Activated naive CD4-positive, alpha-beta T cell treated with anti-CD3 and anti-CD28 coated beads, Interleukin-2, amount 10 ng/mL, durations not matched to agents 7 days and 5 days (primary cell): ENCODE measurements at regions of chr16 and their contacts with region 1.

Region 1: GRCh38 chr16:46908540-46909372 is 24.6 kb downstream of the GPT2 start:
- DNase-seq: peak; percentile 75
- H3K4me3 Mint-ChIP-seq: no peak overlapping the region
- H3K27ac Mint-ChIP-seq: no peak overlapping the region
- H3K4me1 Mint-ChIP-seq: peaks cover 13% of the 10 kb centered on the region
- H3K27me3 Mint-ChIP-seq: no peaks in the 10 kb centered on the region

Region 2: GRCh38 chr16:46673320-46674013 is 235.3 kb before region 1 on chr16:
- CTCF ChIA-PET with region 1: interaction called, 51 read pairs
- DNase-seq: peak; percentile 66
- H3K4me3 Mint-ChIP-seq: no peak overlapping the region
- H3K27ac Mint-ChIP-seq: no peak overlapping the region
- H3K4me1 Mint-ChIP-seq: no peaks in the 10 kb centered on the region
- H3K27me3 Mint-ChIP-seq: no peaks in the 10 kb centered on the region

Region 3: GRCh38 chr16:46859719-46860152 is 49.0 kb before region 1 on chr16:
- CTCF ChIA-PET with region 1: interaction called, 127 read pairs
- DNase-seq: no peak
- H3K4me3 Mint-ChIP-seq: no peak overlapping the region
- H3K27ac Mint-ChIP-seq: no peak overlapping the region
- H3K4me1 Mint-ChIP-seq: peaks cover 38% of the 10 kb centered on the region
- H3K27me3 Mint-ChIP-seq: no peaks in the 10 kb centered on the region

Region 4: DNA sequence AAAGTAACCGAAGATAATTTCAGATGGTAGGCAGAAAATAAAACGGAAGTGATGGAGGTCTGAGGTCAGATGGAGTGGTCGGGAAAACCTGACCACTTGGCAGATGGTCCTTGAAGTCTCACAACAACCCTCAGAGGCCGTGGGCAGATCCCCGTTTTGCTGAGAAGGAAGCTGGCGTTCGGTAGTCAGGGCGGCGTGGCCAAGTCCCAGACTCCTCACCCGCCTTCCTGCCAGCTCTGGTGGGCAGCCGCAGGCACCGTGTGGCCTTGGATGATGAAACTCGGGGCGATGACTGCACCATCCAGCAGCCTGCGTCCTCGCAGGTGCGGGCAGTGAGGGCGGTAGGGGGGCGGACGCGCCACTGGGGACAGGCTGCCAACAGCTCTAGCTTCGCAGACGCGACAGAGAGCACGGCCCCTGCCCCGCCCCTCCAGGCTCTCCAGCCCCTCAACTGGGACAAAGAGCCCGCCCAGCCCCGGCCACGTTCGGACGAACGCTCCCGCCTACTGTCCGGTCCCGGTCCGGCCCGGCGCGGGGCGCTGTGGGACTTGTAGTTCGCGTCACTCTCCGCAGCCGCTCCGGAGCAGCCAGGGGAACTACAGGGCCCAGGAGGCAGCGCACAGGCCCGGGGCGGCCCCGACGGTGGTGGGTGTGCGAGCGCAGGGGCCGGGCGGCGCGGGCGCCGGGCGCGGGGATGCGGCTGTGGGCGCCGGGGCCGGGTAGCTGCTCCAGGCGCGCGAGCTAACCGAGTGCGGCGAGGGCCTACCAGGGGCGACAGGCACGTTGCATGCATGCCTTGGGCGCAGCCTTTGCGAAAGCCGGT is 24.9 kb before region 1 on chr16 and contains the start of gene GPT2:
- CTCF ChIA-PET with region 1: interaction called, 14 read pairs
- DNase-seq: peak; percentile 89
- H3K4me3 Mint-ChIP-seq: peak within 1 kb of the TSS; percentile 74
- H3K27ac Mint-ChIP-seq: no peak within 1 kb of the TSS
- H3K4me1 Mint-ChIP-seq: peaks cover 25% of the 10 kb centered on the region
- H3K27me3 Mint-ChIP-seq: peaks cover 74% of the 10 kb centered on the region

Region 5: DNA sequence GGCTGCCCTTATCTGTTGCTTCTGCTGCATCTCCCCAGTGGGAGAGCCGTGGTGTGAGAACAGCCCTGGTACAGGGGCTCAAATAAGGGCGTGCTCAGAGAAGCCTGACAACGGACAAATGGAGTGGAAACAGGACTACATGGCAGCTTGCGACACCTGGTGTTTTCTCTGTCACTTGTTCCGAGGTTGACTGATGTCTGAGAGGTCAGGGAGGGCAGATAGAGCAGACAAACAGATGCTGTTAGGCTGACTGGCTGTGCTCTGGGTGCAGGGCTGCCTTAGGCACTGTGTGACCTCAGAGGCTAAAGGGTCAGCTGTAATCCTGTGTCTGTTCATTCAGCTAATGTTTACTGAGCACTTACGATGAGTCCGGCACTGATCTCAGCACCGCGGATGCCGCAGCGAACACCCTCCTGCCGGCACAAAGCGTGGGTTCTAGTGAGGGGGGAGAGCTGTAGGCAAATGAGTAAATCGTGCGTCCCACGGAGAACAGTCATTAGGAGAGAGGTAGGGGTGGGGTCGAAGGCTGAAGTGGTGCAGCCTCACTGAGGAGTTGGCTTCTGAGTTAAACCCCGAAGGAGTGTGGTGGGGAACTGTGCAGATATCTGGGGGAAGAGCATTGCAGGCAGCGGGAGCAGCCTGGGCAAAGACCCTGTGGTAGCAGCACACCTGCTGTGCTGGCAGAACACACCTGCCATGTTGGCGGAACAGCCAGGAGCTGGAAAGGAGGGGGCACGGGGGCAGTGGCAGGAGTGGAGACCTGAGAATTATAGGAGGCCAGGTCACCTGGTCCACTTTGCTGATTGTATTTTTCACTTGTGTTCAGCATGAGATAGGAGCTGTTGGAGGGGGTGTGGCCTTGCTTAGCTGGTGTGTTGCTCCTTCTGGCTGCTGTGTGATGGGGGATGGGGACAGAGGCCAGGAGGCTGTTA is 10.4 kb after region 1 on chr16:
- CTCF ChIA-PET with region 1: interaction called, 13 read pairs
- DNase-seq: no peak
- H3K4me3 Mint-ChIP-seq: no peak overlapping the region
- H3K27ac Mint-ChIP-seq: no peak overlapping the region
- H3K4me1 Mint-ChIP-seq: no peaks in the 10 kb centered on the region
- H3K27me3 Mint-ChIP-seq: no peaks in the 10 kb centered on the region

Region 6: GRCh38 chr16:46982335-46982734 is 73.6 kb after region 1 on chr16:
- CTCF ChIA-PET with region 1: no interaction called
- DNase-seq: no peak
- H3K4me3 Mint-ChIP-seq: no peak overlapping the region
- H3K27ac Mint-ChIP-seq: no peak overlapping the region
- H3K4me1 Mint-ChIP-seq: no peaks in the 10 kb centered on the region
- H3K27me3 Mint-ChIP-seq: no peaks in the 10 kb centered on the region

Region 7: GRCh38 chr16:47229053-47230050 is 320.6 kb after region 1 on chr16:
- CTCF ChIA-PET with region 1: no interaction called
- DNase-seq: no peak
- H3K4me3 Mint-ChIP-seq: no peak overlapping the region
- H3K27ac Mint-ChIP-seq: no peak overlapping the region
- H3K4me1 Mint-ChIP-seq: no peaks in the 10 kb centered on the region
- H3K27me3 Mint-ChIP-seq: no peaks in the 10 kb centered on the region

Region 8: DNA sequence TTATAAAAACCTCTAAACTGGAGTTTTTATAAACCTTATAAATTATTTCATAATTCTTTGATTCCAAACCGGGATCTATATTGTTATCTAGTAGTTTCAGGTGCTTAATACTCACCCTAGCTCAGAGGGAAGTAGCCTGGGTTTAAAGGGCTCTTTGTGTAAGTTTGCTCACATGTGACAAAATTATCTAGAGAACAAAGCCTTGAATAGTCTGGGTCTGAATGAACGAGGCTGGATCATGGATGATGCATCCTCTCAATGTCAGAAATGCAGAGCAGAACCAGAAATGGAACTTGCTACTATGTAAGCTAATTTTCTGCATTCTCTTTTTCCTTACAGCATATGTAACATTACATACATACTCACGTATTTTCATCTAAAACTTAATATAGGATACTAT is 338.9 kb after region 1 on chr16:
- CTCF ChIA-PET with region 1: no interaction called
- DNase-seq: no peak
- H3K4me3 Mint-ChIP-seq: no peak overlapping the region
- H3K27ac Mint-ChIP-seq: no peak overlapping the region
- H3K4me1 Mint-ChIP-seq: no peaks in the 10 kb centered on the region
- H3K27me3 Mint-ChIP-seq: no peaks in the 10 kb centered on the region